ENCODE measurements at regions of chr11 and their contacts with region 1.

Region 1: GRCh38 chr11:19903620-19904069 is 191.0 kb downstream of the NAV2 start:
- DNase-seq: peak; percentile 55 to 87
- ATAC-seq: peak; percentile 84

Region 2: GRCh38 chr11:19561011-19561410 is 342.6 kb before region 1 on chr11:
- intact Hi-C with region 1: loop called (anchors 5 to 10 kb)
- DNase-seq: no peak
- ATAC-seq: no peak

Region 3: DNA sequence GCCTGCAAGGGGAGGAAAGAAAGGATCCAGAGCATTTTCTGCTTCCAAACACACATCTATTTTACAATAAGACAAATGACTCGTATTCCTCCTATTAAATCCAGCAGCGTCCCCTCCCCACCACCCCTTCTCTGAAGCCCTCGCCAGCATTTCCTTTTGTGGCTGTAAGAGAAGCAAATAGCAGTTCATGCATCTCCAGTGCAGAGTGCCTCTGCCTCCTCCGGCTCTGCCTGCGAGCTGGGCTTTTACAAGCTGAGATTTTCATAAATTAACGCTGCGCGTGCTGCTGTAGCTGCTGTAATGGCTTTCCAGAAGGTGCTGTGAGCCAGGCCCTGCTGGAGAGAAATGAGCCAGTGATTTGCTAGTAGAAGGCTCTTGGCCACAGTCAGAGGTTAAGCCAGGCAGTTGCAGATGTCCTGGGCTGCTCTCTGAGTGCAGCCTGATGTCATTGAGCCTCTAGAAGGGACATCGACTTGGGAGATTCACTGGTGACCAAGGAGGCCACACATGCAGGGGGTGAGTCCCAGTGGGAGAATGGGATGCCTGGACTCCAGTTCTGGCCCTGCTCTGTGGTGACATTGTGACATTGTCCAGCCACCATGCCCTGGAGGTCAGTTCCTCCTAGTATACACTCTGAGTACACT is 325.5 kb before region 1 on chr11:
- intact Hi-C with region 1: loop called in 1 of 2 experiments (anchors 5 kb)
- DNase-seq: peak; percentile 18 to 76
- ATAC-seq: peak; percentile 24

Region 4: DNA sequence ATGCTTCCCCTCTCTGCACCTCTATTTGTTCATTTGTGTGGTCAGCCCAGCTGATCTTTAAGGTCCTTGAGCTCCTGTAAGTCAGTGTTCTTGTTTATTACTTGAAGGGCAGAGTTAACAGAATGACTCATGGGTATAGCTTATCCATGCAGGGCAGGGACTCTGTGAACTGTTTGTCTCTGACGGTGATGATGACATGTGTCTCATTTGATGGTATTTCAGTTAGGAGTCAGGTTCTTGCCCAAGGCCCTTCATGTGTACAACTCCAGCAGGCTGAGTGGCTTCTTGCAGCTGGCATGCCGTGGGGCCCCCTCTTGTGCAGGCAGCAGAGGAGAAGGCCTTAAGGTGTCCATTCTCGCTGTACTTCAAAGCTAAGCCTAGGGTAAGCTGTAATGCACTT is 91.5 kb after region 1 on chr11:
- intact Hi-C with region 1: no loop called
- DNase-seq: no peak
- ATAC-seq: peak; percentile 92

Measured in left colon (tissue), 2 donors.